ENCODE measurements at regions of chr15 and their contacts with region 1.

Region 1: DNA sequence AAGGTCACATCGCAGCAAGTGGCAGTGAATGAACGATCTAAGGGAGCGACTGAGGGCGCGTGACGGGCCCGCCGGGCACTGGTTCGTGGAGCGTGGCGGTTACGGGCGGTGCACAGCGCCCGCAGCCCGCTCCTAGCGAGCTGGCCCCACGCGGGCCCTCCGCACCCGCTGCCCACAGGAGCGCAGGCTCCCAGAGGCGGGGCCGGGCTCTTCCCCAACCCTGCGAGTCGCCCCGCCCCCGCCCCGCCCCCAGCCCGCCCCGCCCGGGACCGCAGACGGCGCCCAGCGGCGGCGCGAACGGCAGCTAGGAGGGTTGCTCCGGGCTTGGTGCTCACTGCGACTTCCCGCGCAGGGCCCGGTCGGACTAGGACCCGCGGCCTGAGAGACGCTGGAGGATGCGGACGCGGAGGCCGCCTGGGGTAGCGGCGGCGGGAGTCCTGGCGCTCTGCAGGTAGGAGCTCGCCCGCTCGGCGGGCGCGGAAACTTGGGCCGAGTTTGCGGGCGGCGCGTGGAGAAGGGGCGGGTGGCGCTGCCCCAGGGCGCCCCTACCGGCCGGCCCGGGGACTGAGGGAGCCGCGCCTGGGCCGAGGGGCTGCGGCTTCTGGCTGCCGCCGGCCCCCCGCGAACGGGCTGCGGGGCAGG is at the start of gene C15orf39:
- DNase-seq: peak; percentile 52
- ATAC-seq: peak; percentile 80
- H3K4me3 ChIP-seq: peak within 1 kb of the TSS; percentile 97
- H3K27ac ChIP-seq: peak within 1 kb of the TSS; percentile 91
- H3K4me1 ChIP-seq: peaks cover 8% of the 10 kb centered on the region; the same call in 1 of the 2 replicates
- H3K27me3 ChIP-seq: peaks cover 19% of the 10 kb centered on the region
- CTCF ChIP-seq: peak; percentile 77
- POLR2A ChIP-seq: peak; percentile 92
- RAD21 ChIP-seq: peak; percentile 59
- total RNA-seq, gene C15orf39: 1.3 and 1.9 TPM in 2 replicates

Region 2: GRCh38 chr15:74776821-74777768 is 424.6 kb before region 1 on chr15:
- CTCF ChIA-PET with region 1: no interaction called
- POLR2A ChIA-PET with region 1: no interaction called
- dilution Hi-C with region 1: no loop called
- in situ Hi-C with region 1: no loop called
- intact Hi-C with region 1: loop called (anchors 5 kb)
- DNase-seq: no peak
- ATAC-seq: no peak
- H3K4me3 ChIP-seq: no peak overlapping the region
- H3K27ac ChIP-seq: no peak overlapping the region
- H3K4me1 ChIP-seq: peaks cover 4% of the 10 kb centered on the region
- H3K27me3 ChIP-seq: no peaks in the 10 kb centered on the region
- CTCF ChIP-seq: no peak
- POLR2A ChIP-seq: no peak
- RAD21 ChIP-seq: no peak

Region 3: GRCh38 chr15:74906446-74907162 is 295.1 kb before region 1 on chr15 and contains the start of gene FAM219B:
- CTCF ChIA-PET with region 1: no interaction called
- POLR2A ChIA-PET with region 1: no interaction called
- dilution Hi-C with region 1: no loop called
- in situ Hi-C with region 1: no loop called
- intact Hi-C with region 1: loop called (anchors 2 kb)
- DNase-seq: peak; percentile 83
- ATAC-seq: peak; percentile 93
- H3K4me3 ChIP-seq: peak within 1 kb of the TSS; percentile 89
- H3K27ac ChIP-seq: peak within 1 kb of the TSS; percentile 90
- H3K4me1 ChIP-seq: peaks cover 11% of the 10 kb centered on the region
- H3K27me3 ChIP-seq: no peaks in the 10 kb centered on the region
- CTCF ChIP-seq: no peak
- POLR2A ChIP-seq: peak; percentile 92
- RAD21 ChIP-seq: no peak
- total RNA-seq, gene FAM219B: 20.3 and 24.9 TPM in 2 replicates

Region 4: DNA sequence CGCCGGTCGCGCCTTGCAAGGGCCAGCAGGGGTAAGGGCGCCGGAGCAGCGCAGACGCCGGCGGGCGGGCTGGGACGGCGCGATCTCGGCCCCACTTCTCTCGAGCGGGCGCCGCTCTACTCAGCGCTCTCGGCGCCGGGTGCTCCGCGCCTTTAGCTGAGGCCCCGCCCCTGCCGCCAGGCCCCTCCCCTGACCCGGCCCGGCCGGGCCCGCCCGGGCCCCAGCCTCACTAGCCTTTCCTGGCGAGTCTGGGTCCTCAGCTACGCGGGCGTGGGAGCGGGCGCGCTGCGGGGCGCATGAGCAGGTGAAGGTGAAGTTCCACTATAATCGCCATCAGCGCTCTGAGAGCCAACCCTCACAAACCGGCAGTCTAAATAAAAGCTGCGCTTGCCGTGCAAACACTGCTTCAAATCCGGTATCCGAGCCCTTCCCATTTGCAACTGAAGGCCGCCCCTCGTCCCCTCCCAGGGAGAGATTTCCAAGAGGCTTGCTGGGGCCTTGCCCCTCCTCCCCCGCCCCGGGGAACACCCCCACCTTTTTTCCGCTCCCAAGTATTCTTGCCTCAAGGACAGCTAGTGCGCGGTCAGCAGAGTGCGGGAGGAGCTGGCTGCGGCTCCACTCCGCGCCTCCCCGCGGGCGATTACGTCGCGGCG is 245.0 kb before region 1 on chr15 and contains the start of gene RPP25:
- CTCF ChIA-PET with region 1: no interaction called
- POLR2A ChIA-PET with region 1: no interaction called
- dilution Hi-C with region 1: no loop called
- in situ Hi-C with region 1: no loop called
- intact Hi-C with region 1: loop called (anchors 2 kb)
- DNase-seq: peak; percentile 21
- ATAC-seq: peak; percentile 81
- H3K4me3 ChIP-seq: peak within 1 kb of the TSS; percentile 37
- H3K27ac ChIP-seq: no peak within 1 kb of the TSS; the same call in 1 of the 2 replicates
- H3K4me1 ChIP-seq: peaks cover 8% of the 10 kb centered on the region; the same call in 1 of the 2 replicates
- H3K27me3 ChIP-seq: peaks cover 41% of the 10 kb centered on the region
- CTCF ChIP-seq: no peak
- POLR2A ChIP-seq: no peak
- RAD21 ChIP-seq: no peak
- total RNA-seq, gene RPP25: under 0.01 and 0.18 TPM in 2 replicates

Region 5: GRCh38 chr15:75008629-75009326 is 193.0 kb before region 1 on chr15:
- CTCF ChIA-PET with region 1: no interaction called
- POLR2A ChIA-PET with region 1: no interaction called
- dilution Hi-C with region 1: no loop called
- in situ Hi-C with region 1: no loop called
- intact Hi-C with region 1: no loop called
- DNase-seq: no peak
- ATAC-seq: no peak
- H3K4me3 ChIP-seq: no peak overlapping the region
- H3K27ac ChIP-seq: no peak overlapping the region
- H3K4me1 ChIP-seq: no peaks in the 10 kb centered on the region
- H3K27me3 ChIP-seq: peaks cover 22% of the 10 kb centered on the region
- CTCF ChIP-seq: no peak
- POLR2A ChIP-seq: no peak
- RAD21 ChIP-seq: no peak

Region 6: GRCh38 chr15:75023181-75023871 is 178.4 kb before region 1 on chr15 and contains the start of gene PPCDC:
- CTCF ChIA-PET with region 1: interaction called, 14 read pairs
- POLR2A ChIA-PET with region 1: no interaction called
- dilution Hi-C with region 1: no loop called
- in situ Hi-C with region 1: loop called (anchors 5 kb)
- intact Hi-C with region 1: loop called (anchors 1 kb)
- DNase-seq: peak; percentile 92
- ATAC-seq: peak; percentile 100
- H3K4me3 ChIP-seq: peak within 1 kb of the TSS; percentile 64
- H3K27ac ChIP-seq: peak within 1 kb of the TSS; percentile 75
- H3K4me1 ChIP-seq: peaks cover 2% of the 10 kb centered on the region; the same call in 1 of the 2 replicates
- H3K27me3 ChIP-seq: peaks cover 1% of the 10 kb centered on the region; the same call in 1 of the 2 replicates
- CTCF ChIP-seq: no peak
- POLR2A ChIP-seq: peak; percentile 84
- RAD21 ChIP-seq: no peak
- total RNA-seq, gene PPCDC: 5.6 and 13.3 TPM in 2 replicates

Region 7: DNA sequence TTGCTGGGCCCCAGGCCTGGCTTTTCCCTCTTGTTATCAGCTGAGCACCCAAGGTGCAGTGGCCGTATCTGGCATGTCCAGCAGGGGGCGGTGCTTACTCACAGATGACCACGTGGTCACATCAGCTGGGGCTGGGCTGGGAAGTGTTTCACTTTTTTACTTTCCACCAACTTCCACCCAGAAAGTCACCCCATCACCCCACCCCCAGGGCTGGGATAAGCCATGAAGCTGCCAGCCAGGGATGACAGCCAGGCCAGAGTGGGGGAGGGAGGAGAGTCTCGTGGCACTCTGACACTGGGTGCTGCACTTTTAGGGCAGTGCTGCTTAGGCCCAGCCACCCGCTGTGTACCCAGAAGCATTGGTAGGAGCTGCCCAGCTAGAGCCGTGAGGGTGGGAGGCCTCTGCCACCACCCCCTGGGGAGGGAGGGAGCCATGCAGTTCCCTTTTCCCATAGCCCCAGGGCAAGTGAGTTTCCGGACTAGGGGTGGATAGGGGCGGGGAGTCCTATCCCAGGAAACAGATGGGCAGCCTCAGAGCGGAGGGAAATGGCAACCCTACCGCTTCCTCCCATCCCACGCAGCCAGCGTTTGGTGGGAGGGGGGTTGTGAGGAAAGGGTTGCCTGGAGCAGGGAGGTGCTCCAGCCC is 172.2 kb before region 1 on chr15:
- CTCF ChIA-PET with region 1: interaction called, 14 read pairs
- POLR2A ChIA-PET with region 1: interaction called, 3 read pairs
- dilution Hi-C with region 1: no loop called
- in situ Hi-C with region 1: loop called (anchors 5 kb)
- intact Hi-C with region 1: loop called (anchors 1 kb)
- DNase-seq: peak; percentile 79
- ATAC-seq: peak; percentile 98
- H3K4me3 ChIP-seq: no peak overlapping the region
- H3K27ac ChIP-seq: no peak overlapping the region
- H3K4me1 ChIP-seq: peaks cover 11% of the 10 kb centered on the region
- H3K27me3 ChIP-seq: no peaks in the 10 kb centered on the region
- CTCF ChIP-seq: peak; percentile 97
- POLR2A ChIP-seq: no peak
- RAD21 ChIP-seq: peak; percentile 97

Region 8: GRCh38 chr15:75042730-75043508 is 158.8 kb before region 1 on chr15:
- CTCF ChIA-PET with region 1: interaction called, 12 read pairs
- POLR2A ChIA-PET with region 1: interaction called, 8 read pairs
- dilution Hi-C with region 1: no loop called
- in situ Hi-C with region 1: no loop called
- intact Hi-C with region 1: loop called (anchors 1 kb)
- DNase-seq: peak; percentile 64
- ATAC-seq: peak; percentile 5
- H3K4me3 ChIP-seq: no peak overlapping the region
- H3K27ac ChIP-seq: peak overlapping the region; percentile 74
- H3K4me1 ChIP-seq: peaks cover 28% of the 10 kb centered on the region
- H3K27me3 ChIP-seq: no peaks in the 10 kb centered on the region
- CTCF ChIP-seq: peak; percentile 34
- POLR2A ChIP-seq: no peak
- RAD21 ChIP-seq: peak; percentile 40

Region 9: GRCh38 chr15:75237316-75237982 is 35.7 kb after region 1 on chr15:
- CTCF ChIA-PET with region 1: no interaction called
- POLR2A ChIA-PET with region 1: no interaction called
- dilution Hi-C with region 1: no loop called
- in situ Hi-C with region 1: no loop called
- intact Hi-C with region 1: no loop called
- DNase-seq: no peak
- ATAC-seq: no peak
- H3K4me3 ChIP-seq: no peak overlapping the region
- H3K27ac ChIP-seq: no peak overlapping the region
- H3K4me1 ChIP-seq: no peaks in the 10 kb centered on the region
- H3K27me3 ChIP-seq: peaks cover 74% of the 10 kb centered on the region
- CTCF ChIP-seq: no peak
- POLR2A ChIP-seq: no peak
- RAD21 ChIP-seq: no peak